ENCODE measurements at regions of chr4 and their contacts with region 1.

Region 1: GRCh38 chr4:114386637-114387233 is 211.9 kb upstream of the UGT8 start:
- DNase-seq: no peak
- H3K4me3 ChIP-seq: no peak overlapping the region
- H3K27ac ChIP-seq: no peak overlapping the region
- H3K4me1 ChIP-seq: no peaks in the 10 kb centered on the region
- H3K27me3 ChIP-seq: no peaks in the 10 kb centered on the region
- CTCF ChIP-seq: peak in 2 of 3 experiments; percentile 37 to 52
- POLR2A ChIP-seq: no peak

Region 2: GRCh38 chr4:113893546-113893945 is 493.2 kb before region 1 on chr4:
- intact Hi-C with region 1: no loop called
- DNase-seq: no peak
- H3K4me3 ChIP-seq: no peak overlapping the region
- H3K27ac ChIP-seq: no peak overlapping the region
- H3K4me1 ChIP-seq: no peaks in the 10 kb centered on the region
- H3K27me3 ChIP-seq: no peaks in the 10 kb centered on the region
- CTCF ChIP-seq: no peak
- POLR2A ChIP-seq: no peak

Region 3: DNA sequence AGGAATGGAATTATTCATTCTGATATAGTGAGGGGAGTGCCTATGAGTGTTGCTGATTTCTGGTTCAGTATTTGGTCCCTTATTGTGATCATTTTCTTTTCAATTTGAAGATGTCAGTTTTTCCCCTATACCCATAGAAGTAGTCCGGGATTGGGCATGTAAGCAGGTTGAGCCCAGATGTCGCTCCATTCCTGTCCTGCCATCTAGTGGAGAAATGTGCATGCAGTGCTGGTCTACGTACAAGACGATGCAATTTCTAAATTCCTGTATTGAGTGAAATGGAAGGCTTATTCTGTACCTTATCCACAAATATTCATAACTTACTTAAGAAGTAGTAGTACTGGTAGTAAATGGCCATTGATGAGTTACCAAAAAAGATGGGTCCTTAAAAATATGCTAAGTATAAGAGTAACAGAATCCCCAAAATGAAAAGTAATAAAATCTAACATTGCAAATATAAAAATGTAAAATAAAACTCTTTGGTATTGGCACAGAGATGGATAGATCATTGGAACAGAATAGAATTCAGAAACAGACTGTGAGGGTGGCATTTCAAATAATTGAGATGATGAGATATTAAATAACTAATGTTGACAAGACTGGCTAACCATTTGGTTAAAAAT is 272.8 kb after region 1 on chr4:
- intact Hi-C with region 1: loop called (anchors 10 kb)
- DNase-seq: peak; percentile 73
- H3K4me3 ChIP-seq: no peak overlapping the region
- H3K27ac ChIP-seq: no peak overlapping the region
- H3K4me1 ChIP-seq: no peaks in the 10 kb centered on the region
- H3K27me3 ChIP-seq: no peaks in the 10 kb centered on the region
- CTCF ChIP-seq: peak; percentile 19 to 67 (median 41)
- POLR2A ChIP-seq: no peak